Posterior vena cava (tissue), 2 donors: ENCODE measurements at regions of chr13 and their contacts with region 1.

Region 1: DNA sequence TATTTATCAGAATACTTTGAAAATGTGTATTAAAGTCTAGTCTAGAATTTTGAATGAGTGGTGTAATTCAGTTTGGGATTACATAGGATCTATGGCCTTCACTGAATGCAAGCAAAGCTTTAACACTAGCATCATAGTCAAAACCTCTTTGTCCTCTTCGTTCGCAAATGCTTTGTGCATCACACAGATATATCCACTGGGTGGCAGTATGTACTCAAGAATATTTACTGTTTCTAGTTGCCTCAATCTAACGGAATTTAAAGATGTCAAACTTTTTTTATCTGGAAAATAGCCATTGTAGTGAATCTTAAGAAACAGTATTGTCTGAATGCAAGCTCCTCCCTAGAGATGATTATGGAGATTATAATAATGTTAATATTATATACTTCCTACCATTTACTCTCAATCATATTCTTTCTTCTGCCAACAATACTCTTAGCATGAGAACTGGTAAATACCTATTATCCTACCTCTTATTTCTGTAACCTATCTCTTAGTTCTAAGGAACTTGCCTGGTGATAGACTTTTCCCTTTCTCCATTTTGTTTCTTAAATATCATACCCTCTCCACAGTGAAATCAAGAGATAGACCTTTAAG is 25.8 kb downstream of the LACC1 start:
- DNase-seq: no peak

Region 2: GRCh38 chr13:43815204-43815603 is 90.3 kb before region 1 on chr13:
- intact Hi-C with region 1: no loop called
- DNase-seq: no peak

Region 3: DNA sequence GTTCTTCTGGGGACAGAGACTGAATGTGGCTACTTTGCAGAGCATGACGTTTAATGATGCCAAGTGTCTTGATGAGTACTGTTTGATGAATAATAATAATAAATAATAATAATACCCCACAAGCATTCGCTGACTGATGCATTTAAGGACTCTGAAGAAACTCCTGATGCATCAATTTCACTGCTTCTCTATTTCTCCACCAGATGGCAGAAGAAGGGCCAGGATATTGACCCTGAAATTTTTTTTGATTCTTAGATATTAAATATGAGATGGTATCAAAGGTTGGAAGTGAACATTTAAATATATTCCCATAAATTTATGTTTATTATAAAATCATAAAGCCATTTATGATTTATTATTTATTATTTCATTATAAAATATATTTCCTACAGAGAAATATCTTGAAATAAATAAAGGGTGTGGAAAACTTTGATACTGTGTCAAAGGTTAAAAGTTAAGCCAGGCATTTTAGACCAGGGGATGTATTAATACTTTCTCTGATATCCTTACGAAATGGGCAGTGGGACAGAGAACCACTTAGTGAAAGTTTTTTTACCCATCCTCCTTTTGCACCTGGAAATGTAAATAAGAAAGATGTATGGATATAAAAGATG is 145.0 kb after region 1 on chr13:
- intact Hi-C with region 1: loop called (anchors 10 kb)
- DNase-seq: no peak

Region 4: GRCh38 chr13:44435142-44435982 is 529.8 kb after region 1 on chr13:
- intact Hi-C with region 1: loop called (anchors 5 to 10 kb)
- DNase-seq: peak; percentile 97

Region 5: DNA sequence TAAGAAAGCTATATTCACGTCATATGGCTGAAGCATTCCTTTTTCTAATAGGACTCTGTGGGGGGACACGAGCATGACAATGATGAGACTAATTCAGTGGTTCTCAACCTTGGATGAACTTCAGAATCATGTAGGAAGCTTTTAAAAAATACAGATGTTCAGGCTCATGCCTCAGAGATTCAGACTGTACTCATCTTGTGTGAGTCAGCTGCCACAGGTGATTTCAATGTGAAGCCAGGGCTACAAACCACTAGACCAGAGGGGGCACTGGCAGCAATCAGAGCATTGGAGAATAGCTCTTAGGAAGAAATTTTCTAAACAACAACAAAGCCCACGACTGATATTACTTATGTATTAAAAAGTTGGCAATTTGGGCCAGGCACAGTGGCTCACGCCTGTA is 559.8 kb after region 1 on chr13:
- intact Hi-C with region 1: loop called (anchors 10 kb)
- DNase-seq: no peak

Region 6: GRCh38 chr13:44470638-44471562 is 565.4 kb after region 1 on chr13:
- intact Hi-C with region 1: loop called (anchors 10 kb)
- DNase-seq: no peak

Region 7: GRCh38 chr13:44969551-44970484 is 1064.3 kb after region 1 on chr13:
- intact Hi-C with region 1: loop called in 1 of 2 experiments (anchors 5 kb)
- DNase-seq: no peak